ENCODE measurements at regions of chr1 and their contacts with region 1.

Region 1: GRCh38 chr1:235105051-235106043 is 23.3 kb downstream of the TOMM20 start:
- DNase-seq: no peak
- H3K4me3 Mint-ChIP-seq: no peak overlapping the region
- H3K27ac Mint-ChIP-seq: no peak overlapping the region
- H3K4me1 Mint-ChIP-seq: peaks cover 44% of the 10 kb centered on the region
- H3K27me3 Mint-ChIP-seq: no peaks in the 10 kb centered on the region

Region 2: GRCh38 chr1:235045034-235045720 is 60.2 kb before region 1 on chr1:
- CTCF ChIA-PET with region 1: no interaction called
- intact Hi-C with region 1: no loop called
- DNase-seq: no peak
- H3K4me3 Mint-ChIP-seq: no peak overlapping the region
- H3K27ac Mint-ChIP-seq: no peak overlapping the region
- H3K4me1 Mint-ChIP-seq: peaks cover 34% of the 10 kb centered on the region
- H3K27me3 Mint-ChIP-seq: no peaks in the 10 kb centered on the region

Region 3: DNA sequence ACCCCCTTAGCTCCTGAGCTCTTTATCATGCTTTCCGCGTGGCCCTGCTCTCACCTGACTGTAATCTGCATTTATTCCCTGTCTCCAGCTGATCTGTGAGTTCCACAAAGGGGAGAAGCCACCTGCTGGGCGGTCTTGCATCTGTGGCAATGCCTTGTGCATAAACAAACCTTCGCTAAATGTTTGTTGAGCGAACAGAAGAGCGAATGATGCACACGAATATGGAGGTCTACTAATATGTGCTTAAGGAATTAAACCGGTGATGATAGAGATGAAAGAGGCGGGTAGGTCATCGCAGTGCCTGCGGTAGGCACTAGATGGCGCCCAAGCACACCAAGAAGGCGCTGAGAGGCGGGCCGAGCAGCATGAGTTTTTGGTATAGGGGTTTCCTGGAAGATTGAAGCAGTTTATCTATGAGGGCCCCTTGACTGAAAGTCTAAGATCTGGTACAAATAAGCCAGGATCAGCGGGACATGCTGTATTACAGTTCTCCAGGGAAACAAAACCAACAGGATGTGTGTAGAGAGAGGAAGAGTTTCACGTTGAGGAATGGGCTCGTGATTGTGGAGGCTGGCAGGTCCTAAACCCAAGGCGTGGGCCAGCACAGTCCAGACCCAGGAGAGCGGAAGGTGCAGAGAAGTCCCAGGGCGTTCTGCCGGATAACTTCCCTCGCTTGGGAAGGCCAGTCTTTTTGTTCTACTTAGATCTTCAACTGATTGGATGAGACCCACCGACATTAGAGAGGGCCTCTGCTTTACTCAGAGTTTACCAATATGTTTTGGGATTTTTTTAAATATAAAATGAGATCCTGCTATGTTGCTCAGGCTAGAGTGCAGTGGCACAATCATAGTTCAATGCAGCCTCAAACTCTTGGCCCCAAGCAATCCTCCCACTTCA is 11.4 kb before region 1 on chr1:
- CTCF ChIA-PET with region 1: interaction called, 33 read pairs
- intact Hi-C with region 1: no loop called
- DNase-seq: peak; percentile 92
- H3K4me3 Mint-ChIP-seq: no peak overlapping the region
- H3K27ac Mint-ChIP-seq: no peak overlapping the region
- H3K4me1 Mint-ChIP-seq: peaks cover 7% of the 10 kb centered on the region
- H3K27me3 Mint-ChIP-seq: peaks cover 2% of the 10 kb centered on the region

Region 4: DNA sequence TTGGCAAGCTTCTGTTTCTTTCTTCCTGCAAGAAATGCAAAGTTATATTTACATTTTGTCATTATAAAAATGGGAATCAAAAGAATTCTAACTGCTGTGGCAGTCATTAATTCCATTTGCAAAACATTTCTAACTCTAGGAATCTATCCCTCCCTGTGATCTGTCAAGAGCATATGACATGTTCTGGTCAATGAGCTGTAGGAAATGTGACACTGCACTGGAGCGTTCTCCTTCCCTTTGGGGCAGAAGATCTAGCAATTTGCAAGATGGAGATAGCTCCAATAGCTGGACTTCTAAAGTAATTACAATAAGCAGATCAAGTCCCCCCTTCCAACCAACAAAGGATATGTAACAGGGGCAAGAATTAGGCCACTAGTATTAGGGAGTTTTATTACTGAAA is 17.0 kb after region 1 on chr1:
- CTCF ChIA-PET with region 1: interaction called, 12 read pairs
- intact Hi-C with region 1: loop called (anchors 1 kb)
- DNase-seq: no peak
- H3K4me3 Mint-ChIP-seq: no peak overlapping the region
- H3K27ac Mint-ChIP-seq: no peak overlapping the region
- H3K4me1 Mint-ChIP-seq: peaks cover 52% of the 10 kb centered on the region
- H3K27me3 Mint-ChIP-seq: no peaks in the 10 kb centered on the region

Region 5: GRCh38 chr1:235128456-235129328 is 23.3 kb after region 1 on chr1 and contains the start of gene TOMM20:
- CTCF ChIA-PET with region 1: interaction called, 9 read pairs
- intact Hi-C with region 1: loop called (anchors 1 kb)
- DNase-seq: peak; percentile 98
- H3K4me3 Mint-ChIP-seq: peak within 1 kb of the TSS; percentile 96
- H3K27ac Mint-ChIP-seq: peak within 1 kb of the TSS; percentile 94
- H3K4me1 Mint-ChIP-seq: peaks cover 38% of the 10 kb centered on the region
- H3K27me3 Mint-ChIP-seq: no peaks in the 10 kb centered on the region
- total RNA-seq, gene TOMM20: 155 to 192 TPM

Region 6: GRCh38 chr1:235336903-235337302 is 231.6 kb after region 1 on chr1:
- CTCF ChIA-PET with region 1: interaction called, 4 read pairs
- intact Hi-C with region 1: loop called (anchors 1 kb)
- DNase-seq: peak; percentile 23
- H3K4me3 Mint-ChIP-seq: peak overlapping the region; percentile 37
- H3K27ac Mint-ChIP-seq: peak overlapping the region; percentile 74
- H3K4me1 Mint-ChIP-seq: peaks cover 38% of the 10 kb centered on the region
- H3K27me3 Mint-ChIP-seq: no peaks in the 10 kb centered on the region

Region 7: DNA sequence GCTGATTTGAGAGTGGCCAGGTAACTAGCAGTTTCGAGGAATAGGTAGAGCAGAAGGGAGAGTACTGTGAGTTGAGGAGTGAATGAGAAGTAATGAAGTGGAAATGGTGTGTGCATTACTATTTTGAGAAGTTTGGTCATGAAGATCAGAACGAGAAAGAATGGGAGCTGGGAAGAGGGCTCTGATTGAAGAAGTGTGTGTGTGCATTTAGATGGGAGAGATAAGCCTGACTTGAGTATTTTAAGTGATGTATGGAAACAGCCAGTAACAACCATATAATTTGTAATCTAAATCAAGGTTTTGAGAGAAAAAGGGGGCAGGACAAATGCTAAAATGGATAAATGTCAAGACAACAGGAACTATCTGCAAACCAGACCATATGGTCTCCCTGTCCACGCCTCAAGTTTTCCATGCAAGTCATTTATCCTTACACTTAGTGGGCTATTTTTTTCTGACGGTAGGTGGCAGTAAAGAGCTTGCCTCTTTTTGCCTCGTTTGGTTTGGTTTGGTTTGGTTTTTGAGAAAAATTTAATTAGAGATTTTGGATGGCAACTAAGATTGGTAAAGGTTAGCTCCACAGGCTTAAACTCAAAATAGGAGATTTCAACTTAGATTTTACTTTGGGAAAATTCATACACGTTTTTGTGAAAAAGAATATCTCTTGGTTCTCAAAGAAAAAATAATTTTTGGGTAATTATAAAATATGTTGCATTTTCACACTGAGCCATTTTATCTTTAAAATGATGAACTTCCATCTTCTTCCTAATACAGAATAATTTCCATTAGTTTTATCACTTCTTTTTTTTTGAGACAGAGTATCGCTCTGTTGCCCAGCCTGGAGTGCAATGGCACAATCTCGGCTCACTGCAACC is 408.4 kb after region 1 on chr1:
- CTCF ChIA-PET with region 1: no interaction called
- intact Hi-C with region 1: no loop called
- DNase-seq: peak; percentile 54
- H3K4me3 Mint-ChIP-seq: no peak overlapping the region
- H3K27ac Mint-ChIP-seq: no peak overlapping the region
- H3K4me1 Mint-ChIP-seq: no peaks in the 10 kb centered on the region
- H3K27me3 Mint-ChIP-seq: no peaks in the 10 kb centered on the region

Measured in activated naive CD4-positive, alpha-beta T cell treated with anti-CD3 and anti-CD28 coated beads for 36 hours (primary cell).